ENCODE measurements at regions of chr12 and their contacts with region 1.

Region 1: GRCh38 chr12:1093166-1093751 is 102.2 kb downstream of the ERC1 start:
- DNase-seq: peak; percentile 73
- H3K4me3 ChIP-seq: no peak overlapping the region
- H3K27ac ChIP-seq: no peak overlapping the region
- H3K4me1 ChIP-seq: no peaks in the 10 kb centered on the region
- H3K27me3 ChIP-seq: no peaks in the 10 kb centered on the region
- CTCF ChIP-seq: peak; percentile 53 to 58
- POLR2A ChIP-seq: no peak

Region 2: DNA sequence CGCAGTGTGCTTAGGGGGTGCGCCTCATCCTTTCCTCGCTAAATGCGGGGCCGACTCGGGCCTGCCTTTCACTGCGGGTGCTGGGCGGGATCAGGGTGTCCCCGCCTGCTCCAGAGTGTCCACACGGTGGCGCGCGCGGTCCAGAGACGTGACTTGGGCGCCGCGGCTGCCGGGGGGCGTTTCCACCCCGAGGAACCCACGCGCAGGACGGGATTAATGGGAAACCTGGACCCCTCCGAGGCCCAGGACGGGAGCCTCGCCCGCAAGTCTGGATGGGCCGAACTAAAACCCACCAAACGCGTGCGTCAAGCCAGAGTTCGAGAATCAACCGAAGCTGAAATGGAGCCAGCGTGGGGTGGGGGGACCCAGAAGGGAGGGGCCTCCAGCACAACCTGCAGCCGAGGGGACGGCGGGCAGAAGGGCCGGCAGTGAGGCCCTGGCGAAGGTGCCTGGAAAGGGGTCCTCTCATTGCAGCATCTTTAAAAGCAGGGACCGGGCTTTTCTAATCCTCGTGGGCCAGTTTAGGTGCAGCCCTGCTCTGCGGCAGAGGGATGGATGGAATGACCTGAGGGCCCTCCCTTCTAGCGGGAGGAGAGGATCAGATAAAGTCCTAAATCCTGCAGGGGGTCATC is 523.3 kb before region 1 on chr12:
- CTCF ChIA-PET with region 1: interaction called, 21 read pairs
- POLR2A ChIA-PET with region 1: no interaction called
- dilution Hi-C with region 1: no loop called
- intact Hi-C with region 1: loop called (anchors 5 kb)
- DNase-seq: peak; percentile 58
- H3K4me3 ChIP-seq: peak overlapping the region; percentile 36 to 81 (median 67)
- H3K27ac ChIP-seq: peak overlapping the region; percentile 77
- H3K4me1 ChIP-seq: peaks cover 23% of the 10 kb centered on the region
- H3K27me3 ChIP-seq: peaks cover 2 to 3% of the 10 kb centered on the region in 2 experiments
- CTCF ChIP-seq: peak; percentile 79 to 97
- POLR2A ChIP-seq: no peak

Region 3: GRCh38 chr12:884746-885414 is 208.4 kb before region 1 on chr12:
- CTCF ChIA-PET with region 1: interaction called, 12 read pairs
- POLR2A ChIA-PET with region 1: no interaction called
- dilution Hi-C with region 1: no loop called
- intact Hi-C with region 1: loop called (anchors 5 kb)
- DNase-seq: no peak
- H3K4me3 ChIP-seq: no peak overlapping the region
- H3K27ac ChIP-seq: no peak overlapping the region
- H3K4me1 ChIP-seq: no peaks in the 10 kb centered on the region
- H3K27me3 ChIP-seq: no peaks in the 10 kb centered on the region
- CTCF ChIP-seq: no peak
- POLR2A ChIP-seq: no peak

Region 4: GRCh38 chr12:913919-914708 is 179.1 kb before region 1 on chr12:
- CTCF ChIA-PET with region 1: interaction called, 53 read pairs
- POLR2A ChIA-PET with region 1: no interaction called
- dilution Hi-C with region 1: no loop called
- intact Hi-C with region 1: loop called (anchors 5 kb)
- DNase-seq: no peak
- H3K4me3 ChIP-seq: no peak overlapping the region
- H3K27ac ChIP-seq: no peak overlapping the region
- H3K4me1 ChIP-seq: peaks cover 29% of the 10 kb centered on the region
- H3K27me3 ChIP-seq: no peaks in the 10 kb centered on the region
- CTCF ChIP-seq: no peak
- POLR2A ChIP-seq: no peak

Region 5: DNA sequence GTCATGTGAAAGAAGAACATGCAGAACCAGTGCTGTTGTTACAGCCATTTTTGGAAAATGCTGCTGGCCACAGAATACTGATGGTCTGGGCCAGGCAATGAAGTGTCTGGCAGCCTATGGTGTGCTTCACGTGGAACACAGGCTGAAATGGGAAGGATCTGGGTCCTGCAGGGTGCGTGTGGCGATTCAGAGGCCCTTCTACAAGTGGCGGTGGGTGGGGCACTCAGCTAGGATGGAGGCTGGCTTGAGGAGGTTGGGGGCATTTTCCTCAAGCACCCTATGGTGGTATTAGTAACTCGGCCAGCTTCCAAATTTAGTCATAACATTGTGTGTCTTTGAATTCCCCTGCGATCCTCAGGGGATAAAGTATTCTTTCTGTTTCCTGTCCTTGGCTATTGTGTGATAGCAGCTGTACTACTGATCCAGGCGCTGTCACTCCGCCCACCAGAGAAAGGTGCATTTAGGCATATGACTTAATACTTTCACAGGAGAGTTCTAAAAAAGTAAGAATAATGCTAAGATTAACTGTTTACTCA is 134.6 kb before region 1 on chr12:
- CTCF ChIA-PET with region 1: interaction called, 48 read pairs
- POLR2A ChIA-PET with region 1: no interaction called
- dilution Hi-C with region 1: no loop called
- intact Hi-C with region 1: loop called (anchors 5 kb)
- DNase-seq: peak; percentile 61
- H3K4me3 ChIP-seq: no peak overlapping the region
- H3K27ac ChIP-seq: no peak overlapping the region
- H3K4me1 ChIP-seq: peaks cover 13% of the 10 kb centered on the region
- H3K27me3 ChIP-seq: no peaks in the 10 kb centered on the region
- CTCF ChIP-seq: no peak
- POLR2A ChIP-seq: no peak

Region 6: GRCh38 chr12:998020-998874 is 95.0 kb before region 1 on chr12:
- CTCF ChIA-PET with region 1: interaction called, 66 read pairs
- POLR2A ChIA-PET with region 1: interaction called, 13 read pairs
- dilution Hi-C with region 1: no loop called
- intact Hi-C with region 1: loop called (anchors 5 kb)
- DNase-seq: no peak
- H3K4me3 ChIP-seq: no peak overlapping the region
- H3K27ac ChIP-seq: no peak overlapping the region
- H3K4me1 ChIP-seq: peaks cover 4% of the 10 kb centered on the region
- H3K27me3 ChIP-seq: no peaks in the 10 kb centered on the region
- CTCF ChIP-seq: no peak
- POLR2A ChIP-seq: no peak

Region 7: GRCh38 chr12:1078002-1078401 is 15.3 kb before region 1 on chr12:
- CTCF ChIA-PET with region 1: interaction called, 40 read pairs
- POLR2A ChIA-PET with region 1: no interaction called
- dilution Hi-C with region 1: no loop called
- intact Hi-C with region 1: no loop called
- DNase-seq: no peak
- H3K4me3 ChIP-seq: no peak overlapping the region
- H3K27ac ChIP-seq: no peak overlapping the region
- H3K4me1 ChIP-seq: no peaks in the 10 kb centered on the region
- H3K27me3 ChIP-seq: no peaks in the 10 kb centered on the region
- CTCF ChIP-seq: no peak
- POLR2A ChIP-seq: no peak

Measured in endothelial cell of umbilical vein (primary cell).